Breast epithelium (tissue), 4 donors: ENCODE measurements at regions of chr12 and their contacts with region 1.

Region 1: DNA sequence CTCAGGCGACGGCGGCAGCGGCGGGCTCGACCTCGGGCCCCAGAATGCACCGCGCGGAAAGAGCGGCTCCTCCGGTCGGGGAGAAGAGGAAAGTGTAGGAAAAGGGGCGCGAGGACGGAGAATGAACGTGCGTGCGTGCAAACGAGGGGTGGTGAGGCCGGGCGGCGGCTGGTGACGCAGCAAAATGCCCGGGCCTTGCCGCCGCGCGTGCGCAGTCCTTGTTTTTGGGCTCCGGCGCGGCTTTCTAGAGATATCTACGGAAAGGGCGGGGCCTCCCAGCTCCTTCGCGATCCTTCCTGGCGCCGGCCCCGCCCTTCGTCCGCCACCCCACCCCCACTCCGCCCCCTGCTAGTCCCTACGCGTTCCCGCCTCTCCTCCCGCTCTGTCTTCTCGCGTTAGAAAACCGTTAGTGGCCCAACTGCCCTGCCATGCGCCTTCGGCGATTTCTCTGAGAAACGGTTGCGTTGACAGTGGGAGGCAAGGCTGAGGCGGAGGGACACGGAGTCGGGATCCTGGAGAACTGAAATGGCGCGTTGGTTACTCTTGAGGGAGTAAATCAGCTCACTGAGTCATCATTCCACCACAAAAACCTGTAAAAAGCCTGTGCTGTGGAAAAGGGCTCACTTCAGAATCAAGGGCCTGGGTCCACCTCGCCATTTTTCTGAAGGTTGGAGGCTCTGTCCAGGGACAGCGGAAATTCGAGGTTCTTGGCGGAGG is at the start of gene PTGES3:
- DNase-seq: peak; percentile 97
- H3K4me3 ChIP-seq: peak within 1 kb of the TSS; percentile 82 to 99 (median 97)
- H3K27ac ChIP-seq: peak within 1 kb of the TSS; percentile 100
- H3K4me1 ChIP-seq: peaks cover 0 to 4% of the 10 kb centered on the region in 2 donors
- H3K27me3 ChIP-seq: no peaks in the 10 kb centered on the region
- CTCF ChIP-seq: no peak
- POLR2A ChIP-seq: peak; percentile 78
- total RNA-seq, gene PTGES3: 85.0 to 134 (median 111) TPM

Region 2: GRCh38 chr12:56616925-56617324 is 71.4 kb before region 1 on chr12:
- intact Hi-C with region 1: no loop called
- DNase-seq: no peak
- H3K4me3 ChIP-seq: no peak overlapping the region
- H3K27ac ChIP-seq: no peak overlapping the region
- H3K4me1 ChIP-seq: no peaks in the 10 kb centered on the region
- H3K27me3 ChIP-seq: no peaks in the 10 kb centered on the region
- CTCF ChIP-seq: no peak
- POLR2A ChIP-seq: no peak

Region 3: DNA sequence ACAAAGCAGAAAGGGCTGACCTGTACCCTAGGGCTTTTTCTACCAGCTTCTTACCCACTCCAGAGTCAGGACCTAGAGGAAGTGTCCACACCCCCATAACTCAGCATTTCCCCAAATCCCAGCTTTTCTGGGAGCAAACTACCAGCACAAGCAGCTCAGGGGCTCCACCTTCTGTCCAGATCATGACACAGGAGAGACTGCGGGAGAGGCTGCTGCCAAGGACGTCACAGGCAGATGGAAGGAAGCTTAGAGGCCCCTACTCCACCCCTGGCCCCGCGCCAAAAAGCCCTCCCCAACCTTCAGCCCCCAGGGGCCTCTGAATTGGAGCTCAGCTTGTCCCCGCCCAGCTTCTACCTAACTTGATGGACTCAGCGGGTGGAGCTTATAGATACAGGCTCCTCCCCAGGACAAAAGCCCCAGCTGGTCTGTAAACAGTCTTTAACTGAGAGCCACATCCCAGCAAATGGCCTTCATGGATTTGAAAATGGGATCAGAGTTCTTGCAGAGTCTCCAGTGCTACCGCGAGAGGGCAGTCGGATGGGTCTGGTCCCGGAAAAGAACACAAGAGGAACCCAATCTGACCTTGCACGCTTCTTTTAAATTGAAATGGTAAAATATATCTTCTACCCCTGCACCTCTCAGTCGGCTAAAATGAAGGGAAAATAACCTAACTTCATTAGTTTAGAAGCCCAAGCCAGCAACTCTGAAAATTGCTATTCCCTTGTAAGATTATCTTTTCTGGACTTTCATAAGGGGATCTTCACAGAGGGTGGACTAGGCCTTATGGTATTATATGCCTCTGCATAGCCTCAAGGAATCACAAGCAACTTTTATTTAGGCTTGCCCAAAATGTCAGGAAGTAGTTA is 51.4 kb before region 1 on chr12:
- intact Hi-C with region 1: loop called (anchors 10 kb)
- DNase-seq: peak; percentile 99 to 100
- H3K4me3 ChIP-seq: peak overlapping the region; percentile 79 to 95 (median 83)
- H3K27ac ChIP-seq: peak overlapping the region; percentile 96 to 98
- H3K4me1 ChIP-seq: peaks cover 4 to 20% of the 10 kb centered on the region in 2 donors
- H3K27me3 ChIP-seq: no peaks in the 10 kb centered on the region
- CTCF ChIP-seq: peak; percentile 33 to 57 (median 55)
- POLR2A ChIP-seq: no peak